ENCODE measurements at regions of chr5 and their contacts with region 1.

Region 1: DNA sequence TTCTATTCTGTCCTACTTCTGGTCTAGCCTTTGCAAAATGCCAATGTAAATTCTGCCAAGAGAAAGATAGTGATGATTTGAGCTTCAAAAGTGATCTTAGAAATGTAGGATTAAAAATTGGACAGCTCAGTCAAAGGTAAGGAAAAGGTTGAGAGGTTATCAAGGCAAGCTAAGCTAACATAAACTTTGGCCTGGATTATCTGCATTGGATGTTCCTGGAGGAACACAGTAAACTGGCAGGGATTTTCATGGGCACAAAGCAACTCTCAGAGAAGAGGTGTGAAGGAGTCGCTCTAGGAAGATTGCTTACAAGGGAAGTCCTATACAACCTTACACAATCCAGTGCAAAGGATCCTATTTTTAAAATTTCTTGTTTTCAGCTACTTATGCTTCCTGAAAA is 115.2 kb downstream of the JAKMIP2 start:
- DNase-seq: no peak
- ATAC-seq: no peak
- H3K4me3 ChIP-seq: no peak overlapping the region
- H3K27ac ChIP-seq: no peak overlapping the region
- H3K4me1 ChIP-seq: peaks cover 34% of the 10 kb centered on the region
- H3K27me3 ChIP-seq: no peaks in the 10 kb centered on the region
- CTCF ChIP-seq: no peak
- EP300 ChIP-seq: peak in 1 of 2 experiments; percentile 28; a peak in 1 of 4 replicates
- POLR2A ChIP-seq: no peak
- RAD21 ChIP-seq: no peak

Region 2: DNA sequence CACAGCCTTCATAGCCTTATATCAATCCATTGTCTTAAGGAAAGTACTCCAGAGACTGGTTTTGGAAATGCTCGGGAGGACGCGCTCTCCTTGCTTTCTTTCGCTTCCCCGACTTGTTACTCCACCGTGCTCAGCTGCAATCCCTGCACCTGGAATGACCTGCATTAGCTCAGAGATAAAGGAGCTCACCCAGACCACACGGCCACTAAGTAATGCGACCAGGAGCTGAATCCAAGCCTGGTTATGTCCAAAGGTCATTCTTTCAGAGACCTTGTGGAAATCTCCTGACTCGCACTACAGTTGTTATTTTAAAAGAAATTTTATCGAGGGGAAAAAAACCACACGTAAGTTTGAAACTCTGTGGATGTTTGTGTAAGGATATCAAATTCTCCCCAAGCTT is 22.2 kb before region 1 on chr5:
- CTCF ChIA-PET with region 1: no interaction called
- POLR2A ChIA-PET with region 1: no interaction called
- in situ Hi-C with region 1: no loop called
- intact Hi-C with region 1: loop called (anchors 2 kb)
- DNase-seq: peak; percentile 16
- ATAC-seq: peak; percentile 84
- H3K4me3 ChIP-seq: peak overlapping the region in 2 of 3 experiments; percentile 18 to 23; a peak in 2 of 6 replicates
- H3K27ac ChIP-seq: peak overlapping the region; percentile 29
- H3K4me1 ChIP-seq: peaks cover 28% of the 10 kb centered on the region
- H3K27me3 ChIP-seq: 0 out of 5 replicates have a peak, but pooled peaks cover 0 to 4% of the 10 kb centered on the region in 2 experiments
- CTCF ChIP-seq: no peak
- EP300 ChIP-seq: no peak
- POLR2A ChIP-seq: no peak
- RAD21 ChIP-seq: no peak